ENCODE measurements at regions of chr15 and their contacts with region 1.

Region 1: DNA sequence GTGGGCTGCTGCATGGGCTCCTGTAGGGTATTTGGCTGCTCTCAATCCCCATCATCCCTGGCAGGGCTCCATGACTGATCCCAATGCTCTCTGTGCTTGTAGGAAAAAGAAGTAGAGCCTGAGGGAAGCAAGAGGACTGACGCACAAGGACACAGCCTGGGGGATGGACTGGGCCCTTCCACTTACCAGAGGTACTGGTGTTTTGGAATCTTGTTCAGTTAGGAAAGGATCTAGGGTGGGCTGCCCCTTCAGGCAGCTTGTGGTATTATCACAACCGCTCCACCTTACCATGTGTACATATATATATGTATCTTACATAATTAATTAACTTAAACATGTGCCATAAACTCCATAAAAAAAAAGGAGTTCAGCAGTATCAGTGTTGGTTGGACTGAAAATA is 1.3 kb downstream of the SLC28A2 start:
- DNase-seq: peak in 1 of 2 experiments; percentile 47
- H3K4me3 ChIP-seq: no peak overlapping the region
- H3K27ac ChIP-seq: no peak overlapping the region
- H3K4me1 ChIP-seq: no peaks in the 10 kb centered on the region; a peak in 1 of 7 replicates
- H3K27me3 ChIP-seq: no peaks in the 10 kb centered on the region
- CTCF ChIP-seq: peak in 2 of 3 experiments; percentile 38 to 46; a peak in 2 of 4 replicates
- EP300 ChIP-seq: no peak
- POLR2A ChIP-seq: no peak
- RAD21 ChIP-seq: peak; percentile 11 to 32; a peak in 3 of 4 replicates

Region 2: GRCh38 chr15:45205192-45205591 is 48.1 kb before region 1 on chr15:
- CTCF ChIA-PET with region 1: interaction called, 32 read pairs
- POLR2A ChIA-PET with region 1: no interaction called
- DNase-seq: peak in 1 of 2 experiments; percentile 77
- H3K4me3 ChIP-seq: no peak overlapping the region
- H3K27ac ChIP-seq: no peak overlapping the region
- H3K4me1 ChIP-seq: no peaks in the 10 kb centered on the region
- H3K27me3 ChIP-seq: no peaks in the 10 kb centered on the region
- CTCF ChIP-seq: peak; percentile 81 to 97 (median 93)
- EP300 ChIP-seq: no peak
- POLR2A ChIP-seq: no peak
- RAD21 ChIP-seq: peak; percentile 95

Region 3: DNA sequence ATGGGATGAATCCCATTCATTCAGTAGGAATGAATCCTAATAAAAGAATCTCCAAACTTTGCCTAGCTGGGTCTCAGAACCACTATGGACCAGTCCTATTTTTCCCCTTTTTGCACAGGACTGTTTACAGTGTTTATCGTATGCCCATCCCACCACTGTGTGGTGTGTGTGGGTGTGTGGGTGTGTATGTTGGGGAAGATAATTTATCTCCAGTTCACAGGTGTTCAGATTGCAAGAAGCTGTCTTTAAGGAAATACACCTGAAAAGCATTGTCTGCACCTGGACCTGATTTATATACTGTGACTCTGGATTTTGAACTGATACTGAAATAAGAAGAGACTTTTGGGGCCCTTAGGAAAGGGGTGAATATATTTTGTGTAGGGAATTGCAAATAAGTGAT is 40.8 kb before region 1 on chr15:
- CTCF ChIA-PET with region 1: interaction called, 22 read pairs
- POLR2A ChIA-PET with region 1: no interaction called
- DNase-seq: no peak
- H3K4me3 ChIP-seq: no peak overlapping the region
- H3K27ac ChIP-seq: no peak overlapping the region
- H3K4me1 ChIP-seq: no peaks in the 10 kb centered on the region
- H3K27me3 ChIP-seq: no peaks in the 10 kb centered on the region
- CTCF ChIP-seq: no peak
- EP300 ChIP-seq: no peak
- POLR2A ChIP-seq: no peak
- RAD21 ChIP-seq: no peak

Region 4: DNA sequence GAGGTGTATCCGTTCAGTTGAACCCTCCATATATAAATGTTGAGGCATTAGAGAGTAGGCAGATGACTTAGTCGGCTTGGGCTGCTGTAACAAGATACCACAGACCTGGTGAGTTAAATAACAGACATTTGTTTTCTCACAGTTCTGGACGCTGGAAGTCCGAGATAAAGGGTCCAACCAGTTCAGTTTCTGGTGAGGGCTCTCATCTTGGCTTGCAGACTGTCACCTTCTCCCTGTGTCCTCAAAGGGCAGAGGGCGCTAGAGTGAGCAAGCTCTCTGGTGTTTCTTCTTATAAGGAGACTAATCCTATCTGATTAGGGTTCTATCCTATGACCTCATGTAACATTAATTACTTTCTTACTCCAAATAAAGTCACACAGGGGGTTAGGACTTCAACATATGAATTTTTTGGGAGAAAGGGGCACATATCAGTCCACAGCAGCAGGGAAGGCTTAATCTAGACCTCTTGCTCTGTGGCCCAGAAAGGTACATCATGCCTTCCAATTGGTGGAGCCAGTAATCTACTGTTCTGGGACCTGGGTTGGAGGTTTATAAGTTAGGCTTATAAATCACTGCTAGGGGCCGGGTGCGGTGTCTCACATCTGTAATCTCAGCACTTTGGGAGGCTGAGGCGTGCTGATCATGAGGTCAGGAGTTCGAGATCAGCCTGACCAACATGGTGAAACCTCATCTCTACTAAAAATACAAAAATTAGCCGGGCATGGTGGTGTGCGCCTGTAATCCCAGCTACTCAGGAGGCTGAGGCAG is 27.6 kb before region 1 on chr15:
- CTCF ChIA-PET with region 1: interaction called, 19 read pairs
- POLR2A ChIA-PET with region 1: no interaction called
- DNase-seq: no peak
- H3K4me3 ChIP-seq: no peak overlapping the region
- H3K27ac ChIP-seq: no peak overlapping the region
- H3K4me1 ChIP-seq: no peaks in the 10 kb centered on the region
- H3K27me3 ChIP-seq: no peaks in the 10 kb centered on the region
- CTCF ChIP-seq: peak; percentile 26 to 41 (median 26); a peak in 3 of 4 replicates
- EP300 ChIP-seq: no peak
- POLR2A ChIP-seq: no peak
- RAD21 ChIP-seq: peak in 1 of 2 experiments; percentile 8; a peak in 1 of 4 replicates

Region 5: DNA sequence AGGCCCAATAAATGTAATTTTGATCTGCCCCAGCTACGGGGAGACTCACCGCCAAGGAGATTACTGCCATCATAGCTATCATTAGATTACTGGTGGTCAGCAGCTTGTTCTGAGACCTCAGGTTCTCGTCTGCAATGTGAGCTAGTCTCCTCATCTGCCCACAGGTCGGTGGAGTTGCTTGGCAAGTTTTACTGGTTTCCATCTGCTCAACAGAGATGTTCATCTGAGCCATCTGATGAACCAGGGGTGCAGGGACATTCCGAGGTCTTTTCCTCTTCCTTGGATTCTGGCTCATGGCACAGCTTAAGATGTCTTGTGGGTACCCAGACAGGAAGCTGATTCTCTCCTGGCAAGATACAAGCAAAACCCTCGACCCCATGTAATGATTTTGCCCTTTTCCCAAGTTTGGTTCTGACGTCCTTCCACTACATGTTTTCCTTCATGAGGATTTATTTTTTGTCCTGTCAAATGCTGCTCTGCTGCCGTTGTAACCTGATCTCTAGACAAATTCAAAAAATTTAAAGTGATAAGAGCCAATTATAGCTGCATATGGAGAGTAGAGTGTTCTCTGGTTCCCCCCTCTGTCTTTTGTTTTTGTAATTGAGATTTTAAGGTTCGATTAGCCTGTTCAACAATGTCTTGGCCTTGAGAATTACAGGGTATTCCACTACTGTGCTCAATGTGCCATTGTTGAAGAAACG is 16.4 kb before region 1 on chr15:
- CTCF ChIA-PET with region 1: interaction called, 26 read pairs
- POLR2A ChIA-PET with region 1: no interaction called
- DNase-seq: no peak
- H3K4me3 ChIP-seq: no peak overlapping the region
- H3K27ac ChIP-seq: no peak overlapping the region
- H3K4me1 ChIP-seq: no peaks in the 10 kb centered on the region
- H3K27me3 ChIP-seq: no peaks in the 10 kb centered on the region
- CTCF ChIP-seq: no peak
- EP300 ChIP-seq: no peak
- POLR2A ChIP-seq: no peak
- RAD21 ChIP-seq: no peak

Region 6: GRCh38 chr15:45242289-45242688 is 11.0 kb before region 1 on chr15:
- CTCF ChIA-PET with region 1: interaction called, 26 read pairs
- POLR2A ChIA-PET with region 1: no interaction called
- DNase-seq: no peak
- H3K4me3 ChIP-seq: no peak overlapping the region
- H3K27ac ChIP-seq: no peak overlapping the region
- H3K4me1 ChIP-seq: no peaks in the 10 kb centered on the region
- H3K27me3 ChIP-seq: no peaks in the 10 kb centered on the region
- CTCF ChIP-seq: no peak
- EP300 ChIP-seq: no peak
- POLR2A ChIP-seq: no peak
- RAD21 ChIP-seq: no peak

Region 7: GRCh38 chr15:45268135-45268534 is 14.8 kb after region 1 on chr15:
- CTCF ChIA-PET with region 1: interaction called, 20 read pairs
- POLR2A ChIA-PET with region 1: no interaction called
- DNase-seq: peak in 1 of 2 experiments; percentile 50
- H3K4me3 ChIP-seq: no peak overlapping the region
- H3K27ac ChIP-seq: no peak overlapping the region
- H3K4me1 ChIP-seq: no peaks in the 10 kb centered on the region
- H3K27me3 ChIP-seq: no peaks in the 10 kb centered on the region
- CTCF ChIP-seq: peak; percentile 65 to 73 (median 69)
- EP300 ChIP-seq: no peak
- POLR2A ChIP-seq: no peak
- RAD21 ChIP-seq: peak; percentile 64 to 70

Measured in H1 (cell line).